Left lung (tissue), 14 donors: ENCODE measurements at regions of chr6 and their contacts with region 1.

Region 1: DNA sequence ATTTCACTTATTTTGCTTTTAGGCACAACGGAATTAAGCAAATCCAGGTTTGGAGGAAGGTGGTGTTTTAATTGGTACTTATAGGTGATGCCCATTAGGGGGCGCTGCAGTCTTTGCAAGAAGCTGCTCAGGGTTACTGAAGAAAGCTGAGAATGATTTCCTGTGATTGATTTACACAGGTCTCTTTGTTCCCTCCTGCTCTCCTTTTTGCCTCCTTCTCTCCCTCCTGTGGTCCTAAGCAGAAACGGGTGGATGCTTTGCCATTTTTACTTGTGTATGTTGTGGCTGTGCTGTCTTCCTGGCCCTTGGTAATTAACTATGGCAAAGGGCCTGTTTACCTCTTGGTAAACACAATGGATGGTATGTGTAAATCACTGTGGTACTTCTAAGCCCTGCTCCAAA is 97.8 kb downstream of the ANKS1A start:
- DNase-seq: peak in 3 of 4 donors; percentile 63 to 81 (median 64)
- ATAC-seq: peak; percentile 89
- H3K4me3 ChIP-seq: no peak overlapping the region
- H3K27ac ChIP-seq: no peak overlapping the region
- H3K4me1 ChIP-seq: peaks cover 0 to 3% of the 10 kb centered on the region in 2 donors
- H3K27me3 ChIP-seq: no peaks in the 10 kb centered on the region
- CTCF ChIP-seq: peak; percentile 66 to 81

Region 2: GRCh38 chr6:34350137-34350933 is 636.5 kb before region 1 on chr6:
- intact Hi-C with region 1: no loop called
- DNase-seq: no peak
- ATAC-seq: no peak
- H3K4me3 ChIP-seq: no peak overlapping the region
- H3K27ac ChIP-seq: peak overlapping the region in 1 of 2 donors; percentile 36
- H3K4me1 ChIP-seq: peaks cover 0 to 52% of the 10 kb centered on the region in 2 donors
- H3K27me3 ChIP-seq: no peaks in the 10 kb centered on the region
- CTCF ChIP-seq: no peak

Region 3: DNA sequence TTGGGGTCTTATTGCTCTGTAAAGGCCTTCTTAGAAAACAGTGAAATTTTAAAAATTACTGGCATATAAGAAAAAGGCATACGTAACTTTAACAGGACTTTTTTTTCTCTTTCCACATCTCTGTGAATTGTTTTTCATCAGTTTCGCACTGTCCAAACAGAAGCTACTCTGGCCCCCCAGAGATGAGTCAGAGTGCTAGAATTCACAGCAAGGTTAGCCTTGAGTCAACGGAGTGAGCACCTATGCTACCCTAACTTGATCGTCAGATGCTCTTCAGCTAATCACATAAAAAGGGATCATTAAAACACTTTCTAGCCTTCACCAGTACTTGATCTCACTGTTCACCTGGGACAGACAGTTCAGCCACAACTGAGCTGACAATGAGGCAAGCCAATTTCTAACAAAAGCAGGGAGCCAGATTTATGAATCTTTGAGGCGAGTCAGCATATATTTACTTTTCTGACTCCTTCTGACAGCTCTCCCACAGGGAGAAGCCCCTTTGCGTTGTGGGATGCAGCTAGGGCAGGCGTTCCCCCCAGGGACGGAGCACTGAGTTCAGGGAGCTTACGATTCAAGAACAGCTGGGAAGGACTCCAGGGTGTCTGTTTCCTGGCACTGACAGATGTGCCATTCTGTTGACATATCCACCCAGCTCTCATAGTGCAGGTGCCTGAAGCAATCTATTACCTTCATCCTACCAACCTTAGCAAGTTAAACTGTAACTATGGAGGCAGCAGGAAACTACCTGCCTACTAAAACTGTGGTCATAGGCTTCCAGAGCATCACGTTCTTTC is 384.3 kb before region 1 on chr6:
- intact Hi-C with region 1: no loop called
- DNase-seq: no peak
- ATAC-seq: no peak
- H3K4me3 ChIP-seq: no peak overlapping the region
- H3K27ac ChIP-seq: no peak overlapping the region
- H3K4me1 ChIP-seq: peaks cover 10 to 17% of the 10 kb centered on the region in 2 donors
- H3K27me3 ChIP-seq: no peaks in the 10 kb centered on the region
- CTCF ChIP-seq: no peak

Region 4: DNA sequence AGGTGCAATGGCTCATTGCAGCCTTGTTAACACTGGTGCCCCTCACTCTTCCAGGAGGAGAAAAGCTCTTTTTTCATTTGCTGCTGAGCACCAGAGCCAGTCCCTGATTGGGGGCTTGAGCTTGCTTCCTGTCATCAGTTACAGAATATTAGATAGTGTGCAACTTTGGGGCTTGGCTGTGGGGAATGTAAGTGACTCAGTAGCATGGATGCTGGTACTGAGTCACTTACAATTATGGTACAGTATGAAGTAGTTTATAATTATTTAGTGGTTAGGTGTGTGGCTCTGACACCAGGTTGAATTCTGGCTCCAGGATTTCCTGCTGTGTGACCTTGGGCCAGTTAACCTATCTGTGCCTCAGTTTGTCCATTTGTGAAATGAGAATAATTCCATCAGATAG is 60.2 kb before region 1 on chr6:
- intact Hi-C with region 1: no loop called
- DNase-seq: no peak
- ATAC-seq: no peak
- H3K4me3 ChIP-seq: no peak overlapping the region
- H3K27ac ChIP-seq: no peak overlapping the region
- H3K4me1 ChIP-seq: peaks cover 0 to 13% of the 10 kb centered on the region in 2 donors
- H3K27me3 ChIP-seq: no peaks in the 10 kb centered on the region
- CTCF ChIP-seq: no peak

Region 5: DNA sequence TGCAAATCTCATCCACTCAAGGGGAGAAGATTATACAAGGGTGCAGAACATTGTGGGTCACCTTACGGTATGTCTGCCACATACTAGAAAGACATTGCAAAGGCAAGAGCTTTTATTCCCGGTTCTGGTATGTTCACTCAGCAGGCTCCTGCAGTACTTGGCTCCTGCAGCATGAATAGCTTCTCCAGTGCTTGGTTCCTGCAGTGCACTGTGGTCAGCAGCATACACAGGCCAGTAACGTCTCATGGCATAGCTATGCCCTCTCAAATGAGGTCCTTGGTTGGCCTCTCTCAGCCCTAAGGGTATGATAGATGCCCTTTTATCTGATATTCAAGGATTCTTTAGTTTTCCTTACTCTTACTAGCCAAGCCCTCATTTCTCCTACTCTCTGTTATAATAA is 141.7 kb after region 1 on chr6:
- intact Hi-C with region 1: loop called (anchors 5 to 10 kb)
- DNase-seq: no peak
- ATAC-seq: no peak
- H3K4me3 ChIP-seq: no peak overlapping the region
- H3K27ac ChIP-seq: no peak overlapping the region
- H3K4me1 ChIP-seq: no peaks in the 10 kb centered on the region
- H3K27me3 ChIP-seq: no peaks in the 10 kb centered on the region
- CTCF ChIP-seq: no peak

Region 6: DNA sequence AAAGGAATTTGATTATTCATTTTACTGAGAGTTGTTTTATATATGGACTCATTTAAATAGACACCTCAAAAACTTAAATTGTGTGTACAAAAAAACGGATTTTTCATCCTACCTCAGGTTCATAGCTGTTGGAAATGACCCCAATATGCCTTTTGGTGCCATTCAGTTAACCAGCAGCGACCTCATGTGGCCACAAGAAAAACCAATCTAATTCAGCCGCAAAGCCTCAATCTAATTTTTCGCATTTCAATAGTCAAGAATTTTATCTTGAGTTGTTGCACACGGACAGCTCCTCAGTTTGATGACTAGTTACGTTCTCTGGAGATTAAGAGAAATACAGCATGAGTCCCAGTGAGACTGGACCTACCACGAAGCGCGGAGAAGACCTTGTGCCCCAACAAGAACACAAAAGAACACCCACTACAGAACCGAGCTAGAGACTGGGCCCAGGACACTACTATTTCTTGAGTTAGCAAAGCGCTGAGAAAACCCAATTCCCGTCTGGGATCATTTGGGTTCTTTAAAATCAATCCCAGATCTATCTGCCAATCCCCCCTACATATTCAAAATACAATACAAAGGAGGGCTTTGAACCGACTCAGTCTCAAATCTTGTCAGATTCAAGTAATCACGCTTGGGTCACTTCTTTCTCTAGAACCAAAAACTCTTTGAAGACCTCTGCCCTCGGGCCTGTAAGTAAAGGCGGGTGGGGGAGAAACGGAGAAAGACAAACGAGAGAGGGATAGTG is 153.2 kb after region 1 on chr6:
- intact Hi-C with region 1: loop called (anchors 5 to 10 kb)
- DNase-seq: peak in 2 of 4 donors; percentile 67 to 84
- ATAC-seq: peak; percentile 80
- H3K4me3 ChIP-seq: no peak overlapping the region
- H3K27ac ChIP-seq: no peak overlapping the region
- H3K4me1 ChIP-seq: peaks cover 4 to 16% of the 10 kb centered on the region in 2 donors
- H3K27me3 ChIP-seq: peaks cover 0 to 13% of the 10 kb centered on the region in 2 donors
- CTCF ChIP-seq: peak; percentile 64 to 82

Region 7: DNA sequence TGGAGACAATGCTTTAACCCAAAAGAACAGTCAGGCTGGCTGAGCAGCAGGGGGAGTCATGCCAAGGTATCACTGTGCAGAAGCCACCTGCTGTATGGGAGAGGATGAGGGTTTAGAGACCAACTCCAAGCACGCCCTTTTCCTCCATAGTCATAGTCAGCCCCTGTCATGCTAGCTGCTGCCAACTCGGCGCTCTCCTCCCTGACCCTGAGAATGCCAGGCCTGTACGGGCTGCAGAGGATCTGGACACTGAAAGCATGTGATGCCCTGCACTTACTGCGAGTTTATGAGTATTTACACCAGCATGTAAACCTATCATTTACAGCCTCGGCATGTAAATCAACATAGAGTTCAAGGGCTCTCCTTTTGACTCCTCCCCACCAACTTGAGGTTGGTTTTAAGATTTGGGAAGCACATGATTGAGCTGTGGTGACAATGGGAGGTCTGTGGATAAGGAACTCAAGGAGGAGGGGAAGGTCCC is 215.3 kb after region 1 on chr6:
- intact Hi-C with region 1: loop called in 1 of 2 experiments (anchors 10 kb)
- DNase-seq: no peak
- ATAC-seq: peak; percentile 72
- H3K4me3 ChIP-seq: no peak overlapping the region
- H3K27ac ChIP-seq: no peak overlapping the region
- H3K4me1 ChIP-seq: no peaks in the 10 kb centered on the region
- H3K27me3 ChIP-seq: peaks cover 0 to 7% of the 10 kb centered on the region in 2 donors
- CTCF ChIP-seq: no peak